ENCODE measurements at regions of chr16 and their contacts with region 1.

Region 1: GRCh38 chr16:86519649-86520316 is 9.5 kb downstream of the FOXF1 start:
- DNase-seq: peak; percentile 67 to 77 (median 73)
- ATAC-seq: peak; percentile 76
- H3K4me3 ChIP-seq: no peak overlapping the region
- H3K27ac ChIP-seq: no peak overlapping the region
- H3K4me1 ChIP-seq: peaks cover 0 to 11% of the 10 kb centered on the region in 2 experiments; a peak in 3 of 5 replicates
- H3K27me3 ChIP-seq: peaks cover 46 to 92% of the 10 kb centered on the region in 2 experiments
- CTCF ChIP-seq: peak; percentile 78 to 90 (median 89)
- EP300 ChIP-seq: no peak
- POLR2A ChIP-seq: no peak
- RAD21 ChIP-seq: peak; percentile 52 to 76

Region 2: GRCh38 chr16:85821441-85822135 is 698.2 kb before region 1 on chr16:
- CTCF ChIA-PET with region 1: interaction called, 12 read pairs
- POLR2A ChIA-PET with region 1: no interaction called
- in situ Hi-C with region 1: loop called (anchors 10 kb)
- intact Hi-C with region 1: loop called (anchors 5 kb)
- DNase-seq: peak; percentile 80 to 88 (median 87)
- ATAC-seq: peak; percentile 92
- H3K4me3 ChIP-seq: no peak overlapping the region
- H3K27ac ChIP-seq: no peak overlapping the region
- H3K4me1 ChIP-seq: peaks cover 0 to 7% of the 10 kb centered on the region in 2 experiments; a peak in 1 of 5 replicates
- H3K27me3 ChIP-seq: peaks cover 8 to 38% of the 10 kb centered on the region in 2 experiments; a peak in 3 of 5 replicates
- CTCF ChIP-seq: peak; percentile 93 to 98 (median 95)
- EP300 ChIP-seq: no peak
- POLR2A ChIP-seq: no peak
- RAD21 ChIP-seq: peak; percentile 97 to 99

Region 3: DNA sequence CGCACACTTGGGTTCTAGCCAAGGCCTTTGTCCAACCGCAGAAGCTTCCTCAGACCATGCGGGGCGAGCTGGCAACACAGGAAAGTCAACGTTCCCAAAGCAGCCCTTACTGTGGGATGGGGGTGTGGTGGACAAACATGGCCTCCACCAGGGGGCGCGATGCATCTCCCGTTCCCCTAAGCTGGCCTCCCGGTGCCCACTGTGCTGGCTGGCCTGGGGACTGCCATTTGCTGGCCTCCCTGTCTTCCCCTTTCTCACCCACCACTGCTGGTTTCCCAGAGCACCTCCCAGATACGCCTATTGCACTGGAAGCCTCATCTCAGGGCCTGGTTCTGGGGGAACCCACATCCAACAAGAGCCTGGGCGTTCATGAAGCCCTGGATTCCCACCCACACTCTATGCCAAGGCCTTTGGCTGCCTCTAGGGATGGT is 475.5 kb before region 1 on chr16:
- CTCF ChIA-PET with region 1: interaction called, 4 read pairs
- POLR2A ChIA-PET with region 1: interaction called, 3 read pairs
- in situ Hi-C with region 1: loop called (anchors 10 kb)
- intact Hi-C with region 1: loop called (anchors 10 kb)
- DNase-seq: peak; percentile 69 to 79 (median 76)
- ATAC-seq: peak; percentile 92
- H3K4me3 ChIP-seq: no peak overlapping the region
- H3K27ac ChIP-seq: no peak overlapping the region
- H3K4me1 ChIP-seq: no peaks in the 10 kb centered on the region; a peak in 2 of 5 replicates
- H3K27me3 ChIP-seq: peaks cover 13 to 63% of the 10 kb centered on the region in 2 experiments; a peak in 4 of 5 replicates
- CTCF ChIP-seq: peak; percentile 65 to 83 (median 66)
- EP300 ChIP-seq: no peak
- POLR2A ChIP-seq: no peak
- RAD21 ChIP-seq: peak in 1 of 2 experiments; percentile 62; a peak in 2 of 4 replicates

Region 4: DNA sequence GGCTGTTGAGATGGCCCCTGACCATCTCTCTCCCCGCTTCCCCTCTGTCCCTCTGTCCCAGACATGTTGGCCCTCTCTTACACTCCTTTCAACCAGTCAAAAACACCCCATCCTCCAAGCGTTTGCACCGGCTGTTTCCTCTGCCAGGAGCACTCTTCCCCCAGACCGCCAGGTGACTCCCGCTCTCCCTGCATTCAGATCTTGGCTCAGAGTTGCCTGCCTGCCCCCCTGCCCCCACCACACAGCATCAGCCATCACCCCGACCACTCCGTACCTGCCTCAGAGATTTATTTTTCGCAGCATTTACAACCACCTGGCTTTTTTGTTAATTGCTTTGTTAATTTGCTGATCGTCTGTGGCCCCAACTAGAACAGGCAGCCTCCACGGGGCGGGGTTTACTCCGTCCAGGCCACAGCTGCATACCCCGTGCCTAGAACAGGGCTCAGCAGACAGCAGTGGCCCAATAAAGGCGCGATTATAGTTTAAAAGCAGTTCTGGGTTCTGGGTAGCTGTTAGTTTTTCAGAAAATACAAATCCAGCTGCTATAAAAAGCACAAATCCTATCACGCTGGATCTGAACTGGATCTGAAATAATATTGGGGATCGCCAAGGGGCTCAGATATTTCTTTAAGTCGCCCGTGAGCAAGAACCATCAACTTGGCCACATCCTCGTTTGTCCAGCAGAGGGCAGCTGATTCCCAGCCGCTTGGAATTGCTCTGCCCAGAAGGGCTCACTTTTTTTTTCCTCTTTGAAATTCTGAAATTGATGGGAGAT is 447.3 kb before region 1 on chr16:
- CTCF ChIA-PET with region 1: interaction called, 14 read pairs
- POLR2A ChIA-PET with region 1: no interaction called
- in situ Hi-C with region 1: loop called (anchors 5 kb)
- intact Hi-C with region 1: loop called (anchors 2 kb)
- DNase-seq: peak; percentile 66 to 75 (median 70)
- ATAC-seq: peak; percentile 87
- H3K4me3 ChIP-seq: no peak overlapping the region
- H3K27ac ChIP-seq: no peak overlapping the region
- H3K4me1 ChIP-seq: peaks cover 0 to 6% of the 10 kb centered on the region in 2 experiments; a peak in 1 of 5 replicates
- H3K27me3 ChIP-seq: peaks cover 19 to 65% of the 10 kb centered on the region in 2 experiments; a peak in 4 of 5 replicates
- CTCF ChIP-seq: peak; percentile 69 to 83 (median 77)
- EP300 ChIP-seq: no peak
- POLR2A ChIP-seq: no peak
- RAD21 ChIP-seq: peak; percentile 12 to 59; a peak in 2 of 4 replicates

Region 5: GRCh38 chr16:86252596-86252995 is 267.2 kb before region 1 on chr16:
- CTCF ChIA-PET with region 1: interaction called, 10 read pairs
- POLR2A ChIA-PET with region 1: no interaction called
- in situ Hi-C with region 1: no loop called
- intact Hi-C with region 1: loop called (anchors 10 kb)
- DNase-seq: peak; percentile 42 to 62 (median 46)
- ATAC-seq: peak; percentile 85
- H3K4me3 ChIP-seq: no peak overlapping the region
- H3K27ac ChIP-seq: no peak overlapping the region
- H3K4me1 ChIP-seq: no peaks in the 10 kb centered on the region
- H3K27me3 ChIP-seq: peaks cover 0 to 23% of the 10 kb centered on the region in 2 experiments; a peak in 1 of 5 replicates
- CTCF ChIP-seq: peak; percentile 61 to 70 (median 62)
- EP300 ChIP-seq: no peak
- POLR2A ChIP-seq: no peak
- RAD21 ChIP-seq: peak; percentile 14 to 60; a peak in 2 of 4 replicates

Region 6: DNA sequence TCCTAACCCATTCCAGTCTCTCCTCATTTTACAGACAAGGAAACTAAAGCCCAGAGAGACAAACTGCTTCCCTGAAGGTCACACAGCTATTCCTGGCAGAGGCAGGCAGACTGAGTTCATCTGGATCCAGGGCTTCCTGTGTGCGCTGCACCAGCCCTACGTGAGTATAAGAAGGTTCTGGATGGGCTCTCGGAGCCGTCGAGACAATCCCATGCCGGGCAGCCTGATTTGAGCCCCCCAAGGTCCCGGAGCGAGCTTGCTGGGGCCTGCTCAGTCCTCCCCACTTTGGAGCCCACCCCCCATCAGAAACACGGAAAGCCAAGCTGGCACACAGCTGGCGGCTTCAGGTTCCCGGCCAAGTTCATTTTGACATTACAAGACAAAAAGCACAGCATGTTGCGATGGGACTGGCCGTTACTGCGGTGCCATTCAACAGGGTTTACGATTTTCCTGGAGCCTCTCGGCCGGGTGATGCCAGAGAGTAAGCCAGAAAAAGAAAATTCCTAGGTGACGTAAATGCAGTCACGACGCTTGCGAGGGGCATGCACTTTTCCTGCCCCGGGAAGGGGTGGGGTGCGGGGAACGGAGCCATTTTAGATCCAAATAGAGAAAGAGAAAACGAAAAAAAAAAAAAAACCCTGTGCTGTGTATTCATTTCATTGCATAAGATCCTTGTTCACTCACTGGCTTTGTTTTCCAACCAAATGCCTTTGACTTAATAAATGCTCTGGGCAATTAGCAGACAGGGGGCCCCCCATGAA is 176.6 kb before region 1 on chr16:
- CTCF ChIA-PET with region 1: interaction called, 7 read pairs
- POLR2A ChIA-PET with region 1: no interaction called
- in situ Hi-C with region 1: loop called (anchors 5 kb)
- intact Hi-C with region 1: loop called (anchors 1 kb)
- DNase-seq: no peak
- ATAC-seq: no peak
- H3K4me3 ChIP-seq: no peak overlapping the region
- H3K27ac ChIP-seq: no peak overlapping the region
- H3K4me1 ChIP-seq: no peaks in the 10 kb centered on the region
- H3K27me3 ChIP-seq: peaks cover 10 to 25% of the 10 kb centered on the region in 2 experiments; a peak in 4 of 5 replicates
- CTCF ChIP-seq: no peak
- EP300 ChIP-seq: no peak
- POLR2A ChIP-seq: no peak
- RAD21 ChIP-seq: no peak